Activated CD4-positive, alpha-beta T cell treated with anti-CD3 and anti-CD28 coated beads for 36 hours (primary cell): ENCODE measurements at regions of chr10 and their contacts with region 1.

Region 1: DNA sequence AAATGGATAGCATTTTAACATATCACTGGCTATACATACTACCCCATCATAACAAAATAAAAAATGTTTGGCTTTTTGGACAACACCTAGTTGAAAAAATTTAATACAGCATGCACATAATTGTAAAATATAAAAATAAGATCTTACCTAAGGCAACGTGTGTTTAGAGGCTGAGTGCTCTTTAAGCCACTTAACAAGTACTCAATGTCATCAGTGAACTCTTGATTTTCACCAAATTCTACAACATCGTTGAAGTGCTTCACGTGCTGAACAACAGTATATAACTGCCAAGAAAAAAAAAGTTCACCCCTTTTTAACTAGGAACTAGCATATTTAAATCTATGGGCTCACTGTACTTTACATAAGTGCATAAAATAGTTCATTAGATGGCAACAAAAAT is 49.5 kb downstream of the WAPL start:
- DNase-seq: no peak
- ATAC-seq: no peak
- H3K4me3 Mint-ChIP-seq: no peak overlapping the region
- H3K27ac Mint-ChIP-seq: no peak overlapping the region
- H3K4me1 Mint-ChIP-seq: peaks cover 9% of the 10 kb centered on the region
- H3K27me3 Mint-ChIP-seq: no peaks in the 10 kb centered on the region

Region 2: DNA sequence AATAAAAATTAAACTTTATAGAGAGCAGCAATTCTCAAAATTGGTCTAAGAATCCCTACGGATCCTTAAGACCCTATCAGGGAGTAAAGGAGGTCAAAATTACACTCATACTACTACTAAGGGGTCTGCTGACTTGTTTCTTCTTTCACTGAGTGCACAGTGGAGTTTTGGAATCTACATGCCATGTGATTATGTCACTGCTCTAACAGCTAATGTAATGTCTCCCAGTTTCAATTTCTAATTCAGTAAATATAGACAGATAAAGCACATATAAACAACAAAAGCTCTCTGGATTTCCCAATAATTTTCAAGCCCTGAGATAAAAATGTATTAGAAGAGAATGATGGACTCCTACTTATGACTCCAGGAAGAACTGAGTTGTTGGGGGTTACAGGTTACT is 25.1 kb before region 1 on chr10:
- CTCF ChIA-PET with region 1: interaction called, 3 read pairs
- POLR2A ChIA-PET with region 1: no interaction called
- intact Hi-C with region 1: loop called in 1 of 2 experiments (anchors 2 kb)
- DNase-seq: no peak
- ATAC-seq: peak; percentile 47
- H3K4me3 Mint-ChIP-seq: no peak overlapping the region
- H3K27ac Mint-ChIP-seq: peak overlapping the region; percentile 73
- H3K4me1 Mint-ChIP-seq: peaks cover 30% of the 10 kb centered on the region
- H3K27me3 Mint-ChIP-seq: no peaks in the 10 kb centered on the region

Region 3: DNA sequence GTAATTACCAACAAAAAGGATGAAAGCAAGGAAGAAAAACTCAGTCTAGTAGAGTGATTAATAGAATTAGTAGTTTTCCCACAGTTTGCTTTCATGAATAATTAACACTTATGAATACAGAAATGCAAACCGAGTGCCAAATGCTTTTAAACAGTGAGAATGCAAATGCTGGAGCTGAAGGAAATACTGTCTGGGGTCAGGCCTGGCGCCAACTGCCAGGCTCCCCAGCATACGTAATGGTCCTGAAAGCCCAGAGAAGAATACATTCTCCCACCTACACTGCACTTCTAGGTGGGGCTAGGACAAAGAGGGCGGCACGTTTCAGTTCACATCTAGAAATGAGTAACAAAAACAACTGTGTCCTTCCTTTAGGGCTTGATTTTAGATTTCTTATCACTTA is 592.6 kb after region 1 on chr10:
- CTCF ChIA-PET with region 1: no interaction called
- POLR2A ChIA-PET with region 1: no interaction called
- intact Hi-C with region 1: no loop called
- DNase-seq: no peak
- ATAC-seq: no peak
- H3K4me3 Mint-ChIP-seq: no peak overlapping the region
- H3K27ac Mint-ChIP-seq: no peak overlapping the region
- H3K4me1 Mint-ChIP-seq: no peaks in the 10 kb centered on the region
- H3K27me3 Mint-ChIP-seq: no peaks in the 10 kb centered on the region